ENCODE measurements at regions of chr2 and their contacts with region 1.

Region 1: GRCh38 chr2:222677981-222678380 is 6.5 kb downstream of the MOGAT1 start:
- DNase-seq: no peak
- ATAC-seq: no peak
- H3K4me3 ChIP-seq: no peak overlapping the region
- H3K4me3 Mint-ChIP-seq: no peak overlapping the region
- H3K27ac ChIP-seq: no peak overlapping the region
- H3K27ac Mint-ChIP-seq: no peak overlapping the region
- H3K4me1 ChIP-seq: no peaks in the 10 kb centered on the region
- H3K4me1 Mint-ChIP-seq: no peaks in the 10 kb centered on the region
- H3K27me3 ChIP-seq: peaks cover 5 to 15% of the 10 kb centered on the region in 2 experiments
- H3K27me3 Mint-ChIP-seq: peaks cover 67% of the 10 kb centered on the region
- CTCF ChIP-seq: no peak

Region 2: DNA sequence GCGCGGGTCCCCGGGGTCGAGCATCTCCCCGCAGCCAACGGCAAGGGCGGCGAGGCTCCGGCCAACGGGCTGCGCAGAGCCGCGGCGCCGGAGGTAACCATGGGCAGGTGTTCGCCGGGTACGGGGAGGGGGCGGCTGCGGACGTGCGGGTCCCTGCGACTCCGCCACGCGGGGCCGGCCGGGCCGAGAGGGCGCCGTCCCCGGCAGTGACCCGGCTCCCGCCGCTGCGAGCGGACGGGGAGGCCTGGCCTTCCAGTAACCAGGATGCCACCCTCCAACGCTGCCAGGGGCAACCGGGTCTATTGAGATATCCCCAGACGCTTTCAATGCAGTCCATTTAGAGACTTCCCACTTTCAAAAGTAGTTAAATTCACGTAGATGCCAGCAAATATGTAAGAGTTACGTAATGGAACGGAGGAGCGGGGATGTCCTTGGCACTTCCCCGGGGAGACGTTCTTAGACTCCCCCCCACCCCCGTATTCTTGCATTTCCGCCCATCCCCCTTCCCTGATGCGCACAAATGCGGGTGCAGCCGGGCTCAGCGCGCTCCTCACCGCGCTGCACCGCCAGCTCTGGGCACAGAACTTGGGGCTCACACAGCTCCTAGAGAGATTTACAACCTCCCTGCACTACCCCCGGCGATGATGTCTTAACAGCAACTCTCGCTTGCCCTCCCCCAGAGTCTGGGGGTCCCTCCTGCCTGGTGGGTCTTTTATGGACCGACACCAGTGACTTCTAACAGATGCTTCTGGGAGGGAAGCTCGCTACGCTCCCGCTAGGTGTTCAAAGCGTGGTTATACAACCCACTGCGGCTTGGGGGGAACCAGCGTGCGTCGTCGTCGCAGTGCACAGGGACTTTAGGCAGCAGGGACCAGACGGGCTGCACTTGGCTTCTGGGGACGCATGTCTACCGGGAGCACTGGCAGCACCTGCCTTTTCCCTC is 253.0 kb before region 1 on chr2:
- CTCF ChIA-PET with region 1: no interaction called
- POLR2A ChIA-PET with region 1: no interaction called
- intact Hi-C with region 1: no loop called
- DNase-seq: peak in 10 of 14 experiments; percentile 3 to 79 (median 14)
- ATAC-seq: peak; percentile 51
- H3K4me3 ChIP-seq: peak overlapping the region; percentile 61
- H3K4me3 Mint-ChIP-seq: peak overlapping the region; percentile 93
- H3K27ac ChIP-seq: peak overlapping the region in 1 of 2 donors; percentile 40
- H3K27ac Mint-ChIP-seq: peak overlapping the region; percentile 70
- H3K4me1 ChIP-seq: peaks cover 37% of the 10 kb centered on the region
- H3K4me1 Mint-ChIP-seq: peaks cover 49% of the 10 kb centered on the region
- H3K27me3 ChIP-seq: peaks cover 0 to 29% of the 10 kb centered on the region in 2 experiments
- H3K27me3 Mint-ChIP-seq: peaks cover 63% of the 10 kb centered on the region
- CTCF ChIP-seq: no peak

Region 3: GRCh38 chr2:222690564-222691200 is 12.7 kb after region 1 on chr2:
- CTCF ChIA-PET with region 1: interaction called, 10 read pairs
- POLR2A ChIA-PET with region 1: no interaction called
- intact Hi-C with region 1: no loop called
- DNase-seq: peak; percentile 52 to 86 (median 64)
- ATAC-seq: peak; percentile 99
- H3K4me3 ChIP-seq: no peak overlapping the region
- H3K4me3 Mint-ChIP-seq: no peak overlapping the region
- H3K27ac ChIP-seq: no peak overlapping the region
- H3K27ac Mint-ChIP-seq: no peak overlapping the region
- H3K4me1 ChIP-seq: peaks cover 8% of the 10 kb centered on the region
- H3K4me1 Mint-ChIP-seq: peaks cover 16% of the 10 kb centered on the region
- H3K27me3 ChIP-seq: no peaks in the 10 kb centered on the region
- H3K27me3 Mint-ChIP-seq: peaks cover 20% of the 10 kb centered on the region
- CTCF ChIP-seq: peak; percentile 96